ENCODE measurements at regions of chr16 and their contacts with region 1.

Region 1: DNA sequence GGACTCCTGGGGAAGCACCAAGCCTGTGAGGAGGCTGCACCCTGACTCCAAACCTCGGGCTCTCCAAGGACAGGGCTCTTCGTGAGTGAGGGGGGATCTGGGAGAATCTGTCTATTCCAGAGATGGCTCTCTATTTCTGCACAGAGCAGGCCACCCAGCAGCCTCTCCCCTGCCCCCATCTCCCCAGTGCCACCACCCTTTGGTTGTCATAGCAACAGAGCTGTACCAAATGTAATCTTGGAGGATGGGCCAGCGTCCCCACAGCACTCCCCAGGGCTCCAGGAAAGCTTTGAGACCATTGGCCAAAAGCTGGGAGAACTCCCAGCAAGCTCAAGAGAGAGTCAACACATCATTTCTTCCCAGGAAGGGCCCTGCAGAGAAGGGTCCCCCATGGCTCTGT is 49.3 kb downstream of the ABCC12 start:
- DNase-seq: no peak

Region 2: GRCh38 chr16:49259330-49259729 is 1152.9 kb after region 1 on chr16:
- intact Hi-C with region 1: loop called in 1 of 2 experiments (anchors 5 kb)
- DNase-seq: no peak